Testis (tissue), 5 donors: ENCODE measurements at regions of chr11 and their contacts with region 1.

Region 1: GRCh38 chr11:76680518-76681425 is 10.2 kb upstream of the LRRC32 start:
- DNase-seq: peak; percentile 80
- H3K4me3 ChIP-seq: no peak overlapping the region
- H3K27ac ChIP-seq: no peak overlapping the region
- H3K4me1 ChIP-seq: peaks cover 6% of the 10 kb centered on the region
- H3K27me3 ChIP-seq: no peaks in the 10 kb centered on the region
- CTCF ChIP-seq: peak; percentile 70 to 82 (median 79)
- POLR2A ChIP-seq: no peak

Region 2: DNA sequence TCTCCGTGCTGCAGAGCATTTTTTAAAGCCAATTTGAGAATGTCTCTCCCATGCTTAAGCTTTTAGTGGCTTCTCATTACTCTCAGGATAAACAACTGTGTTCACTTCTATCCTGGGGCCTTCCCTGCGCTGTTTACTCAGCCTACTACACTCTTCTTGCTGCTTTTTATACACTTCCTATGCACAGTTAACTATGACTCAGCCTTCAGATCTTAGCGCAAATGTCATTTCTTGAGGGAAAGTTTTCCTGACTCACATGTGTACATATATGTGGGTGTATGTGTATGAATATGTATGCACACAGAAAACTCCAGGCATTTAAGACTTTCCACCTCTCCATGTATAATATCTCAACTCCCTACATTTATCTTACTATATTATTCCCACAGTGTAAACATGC is 309.6 kb before region 1 on chr11:
- intact Hi-C with region 1: no loop called
- DNase-seq: no peak
- H3K4me3 ChIP-seq: no peak overlapping the region
- H3K27ac ChIP-seq: no peak overlapping the region
- H3K4me1 ChIP-seq: no peaks in the 10 kb centered on the region
- H3K27me3 ChIP-seq: no peaks in the 10 kb centered on the region
- CTCF ChIP-seq: no peak
- POLR2A ChIP-seq: no peak

Region 3: DNA sequence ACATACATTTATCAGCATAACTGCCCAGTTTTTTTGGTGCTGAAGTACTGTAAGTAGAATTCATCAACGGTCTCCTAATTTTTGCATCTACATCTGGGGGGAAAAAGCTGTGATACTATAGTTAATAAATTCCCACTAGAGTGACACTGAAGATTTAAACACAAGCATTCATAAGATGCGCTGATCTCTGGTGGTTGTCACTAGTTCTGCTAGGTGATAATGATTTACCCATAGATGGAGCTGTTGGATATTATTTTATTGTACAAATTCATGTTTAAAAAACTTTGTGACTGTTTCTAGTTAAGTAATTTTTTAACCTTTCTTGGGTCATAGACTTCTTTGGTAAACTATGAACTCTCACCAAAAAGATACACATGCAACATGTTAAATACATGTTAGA is 129.4 kb before region 1 on chr11:
- intact Hi-C with region 1: loop called (anchors 10 kb)
- DNase-seq: no peak
- H3K4me3 ChIP-seq: no peak overlapping the region
- H3K27ac ChIP-seq: no peak overlapping the region
- H3K4me1 ChIP-seq: no peaks in the 10 kb centered on the region
- H3K27me3 ChIP-seq: no peaks in the 10 kb centered on the region
- CTCF ChIP-seq: no peak
- POLR2A ChIP-seq: no peak